Ascending aorta (tissue), 2 donors: ENCODE measurements at regions of chr12 and their contacts with region 1.

Region 1: DNA sequence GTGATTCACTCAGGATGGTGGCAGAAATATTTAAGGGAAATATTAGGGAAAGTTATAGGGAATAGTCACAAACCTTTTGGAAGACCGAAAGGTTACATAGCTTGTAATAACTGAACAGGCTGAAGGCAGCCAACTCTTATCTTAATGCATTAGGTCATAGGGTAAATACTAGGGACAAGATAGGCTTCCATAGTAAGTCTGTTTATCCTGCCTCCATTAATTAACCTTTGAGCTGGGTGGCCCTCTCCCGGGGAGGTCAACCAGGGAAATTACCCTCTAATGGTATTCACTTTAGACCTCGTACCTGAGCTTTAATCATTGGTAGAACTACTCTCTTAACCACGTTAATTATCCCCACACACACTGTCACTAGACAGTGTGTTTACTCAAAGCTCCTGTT is 981.8 kb downstream of the SLC16A7 start:
- DNase-seq: no peak
- H3K4me3 ChIP-seq: no peak overlapping the region
- H3K27ac ChIP-seq: no peak overlapping the region
- H3K4me1 ChIP-seq: no peaks in the 10 kb centered on the region
- H3K27me3 ChIP-seq: no peaks in the 10 kb centered on the region
- CTCF ChIP-seq: no peak

Region 2: DNA sequence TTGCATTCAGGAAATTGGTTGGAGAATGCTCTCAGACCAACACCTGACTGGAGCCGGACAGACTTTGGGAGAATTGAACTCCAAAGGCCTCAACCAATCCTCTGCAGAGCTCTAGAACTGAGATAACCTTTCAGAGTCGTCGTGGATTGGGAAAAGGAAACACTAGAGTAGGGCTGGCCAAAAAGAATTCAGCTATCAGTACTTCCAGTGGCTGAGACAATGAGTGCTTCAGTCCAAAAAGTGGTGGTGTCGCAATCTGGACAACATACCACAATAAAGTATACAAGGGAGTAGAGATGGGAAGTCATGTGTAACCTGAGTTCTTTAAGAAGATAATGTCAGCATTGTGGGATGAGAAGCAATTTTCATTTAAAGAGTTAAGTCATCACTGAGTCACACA is 604.7 kb before region 1 on chr12:
- intact Hi-C with region 1: no loop called
- DNase-seq: no peak
- H3K4me3 ChIP-seq: no peak overlapping the region
- H3K27ac ChIP-seq: no peak overlapping the region
- H3K4me1 ChIP-seq: no peaks in the 10 kb centered on the region
- H3K27me3 ChIP-seq: no peaks in the 10 kb centered on the region
- CTCF ChIP-seq: no peak

Region 3: DNA sequence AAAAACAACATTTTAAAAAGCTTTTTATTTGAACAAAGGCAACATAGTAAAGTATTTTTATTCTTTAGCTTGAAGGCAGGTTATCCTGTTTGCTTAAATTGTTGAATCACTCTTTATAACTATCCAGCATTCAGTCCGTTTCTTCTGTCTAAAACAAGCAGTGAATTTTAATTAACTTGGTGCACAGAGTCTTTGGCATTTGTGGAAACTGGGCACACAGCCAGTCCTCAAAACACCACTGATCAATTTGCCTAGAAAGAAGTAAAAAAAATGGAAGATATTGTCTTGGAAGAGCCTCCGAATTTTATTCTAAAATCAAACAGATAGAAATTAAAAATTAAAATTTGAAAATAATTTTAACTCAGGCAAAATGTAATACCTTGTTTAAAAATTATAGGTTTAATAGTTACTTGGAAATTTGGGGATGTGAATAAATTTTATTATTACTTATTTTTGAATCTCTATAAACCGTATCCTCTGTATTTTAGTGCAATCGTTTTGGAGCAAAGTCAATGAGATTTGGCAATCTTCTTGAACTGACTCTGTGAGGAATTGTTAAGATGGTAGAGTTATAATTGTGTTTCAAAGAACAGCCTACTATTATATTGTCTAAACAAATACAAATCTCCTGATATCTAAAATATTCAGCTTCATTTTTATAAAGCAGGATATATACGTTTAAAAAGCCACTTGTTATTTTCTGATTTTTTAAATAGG is 54.8 kb before region 1 on chr12:
- intact Hi-C with region 1: loop called (anchors 2 kb)
- DNase-seq: no peak
- H3K4me3 ChIP-seq: no peak overlapping the region
- H3K27ac ChIP-seq: no peak overlapping the region
- H3K4me1 ChIP-seq: no peaks in the 10 kb centered on the region
- H3K27me3 ChIP-seq: no peaks in the 10 kb centered on the region
- CTCF ChIP-seq: no peak